Activated CD8-positive, alpha-beta T cell treated with anti-CD3 and anti-CD28 coated beads, Interleukin-2, amount 10 ng/mL, durations not matched to agents 7 days and 5 days (primary cell): ENCODE measurements at regions of chr10 and their contacts with region 1.

Region 1: DNA sequence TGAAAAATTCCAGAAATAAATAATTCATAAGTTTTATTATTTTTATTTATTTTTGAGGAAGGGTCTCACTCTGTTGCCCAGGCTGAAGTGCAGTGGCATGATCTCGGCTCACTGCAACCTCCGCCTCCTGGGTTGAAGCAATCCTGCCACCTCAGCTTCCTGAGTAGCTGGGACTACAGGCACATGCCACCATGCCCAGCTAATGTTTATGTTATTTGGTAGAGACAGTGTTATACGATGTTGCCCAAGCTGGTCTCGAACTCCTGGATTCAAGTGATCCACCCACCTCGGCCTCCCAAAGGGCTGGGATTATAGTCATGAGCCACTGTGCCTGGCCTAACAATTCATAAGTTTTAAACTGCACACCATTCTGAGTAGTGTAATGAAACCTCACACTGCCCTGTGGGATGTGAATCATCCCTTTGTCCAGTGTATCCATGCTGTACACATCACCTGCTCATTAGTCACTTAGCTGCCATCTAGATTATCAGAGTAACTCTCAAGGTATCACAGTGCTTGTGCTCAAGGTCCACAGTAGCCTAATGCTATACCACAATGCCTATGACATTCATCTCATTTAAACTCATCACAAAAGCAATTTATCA is 17.9 kb downstream of the RTKN2 start:
- DNase-seq: no peak
- ATAC-seq: no peak
- H3K4me3 Mint-ChIP-seq: no peak overlapping the region
- H3K27ac Mint-ChIP-seq: no peak overlapping the region
- H3K4me1 Mint-ChIP-seq: peaks cover under 1% of the 10 kb centered on the region
- H3K27me3 Mint-ChIP-seq: no peaks in the 10 kb centered on the region

Region 2: DNA sequence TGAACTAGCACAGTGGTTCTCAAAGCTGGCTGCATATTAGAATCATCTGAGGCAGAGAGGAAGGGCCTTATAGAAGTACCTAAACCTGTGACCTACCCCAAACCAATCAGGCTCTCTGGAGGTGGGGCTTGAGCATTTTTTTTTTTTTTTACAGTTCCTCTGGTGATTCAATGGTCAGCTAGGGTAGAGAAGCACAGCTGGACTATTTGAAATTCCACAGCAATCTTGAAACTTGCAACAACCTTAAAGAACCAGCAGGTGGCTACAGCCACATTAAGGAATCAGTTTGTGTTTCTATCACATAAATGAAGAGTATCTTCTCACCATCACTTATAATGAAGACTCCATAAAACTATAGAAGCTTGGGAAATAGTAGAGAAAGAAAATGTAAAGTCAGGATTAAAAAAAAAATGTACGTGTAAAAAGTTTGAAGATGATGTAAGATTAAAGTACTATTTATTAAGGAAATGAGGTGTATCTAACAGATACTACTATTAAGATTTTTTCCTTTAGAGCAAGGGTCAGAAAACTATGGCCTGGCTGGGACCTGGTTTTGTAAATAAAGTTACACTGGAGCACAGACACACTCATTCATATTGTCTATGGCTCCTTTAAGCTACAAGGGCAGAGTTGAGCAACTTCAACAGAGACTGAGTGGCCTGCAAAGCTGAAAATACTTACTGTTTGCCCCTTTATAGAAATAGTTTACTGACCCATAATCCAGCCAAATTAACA is 14.2 kb after region 1 on chr10:
- CTCF ChIA-PET with region 1: interaction called, 22 read pairs
- POLR2A ChIA-PET with region 1: no interaction called
- DNase-seq: no peak
- ATAC-seq: no peak
- H3K4me3 Mint-ChIP-seq: no peak overlapping the region
- H3K27ac Mint-ChIP-seq: no peak overlapping the region
- H3K4me1 Mint-ChIP-seq: peaks cover 17% of the 10 kb centered on the region
- H3K27me3 Mint-ChIP-seq: peaks cover 26% of the 10 kb centered on the region